HepG2 (cell line): ENCODE measurements at regions of chr2 and their contacts with region 1.

Region 1: DNA sequence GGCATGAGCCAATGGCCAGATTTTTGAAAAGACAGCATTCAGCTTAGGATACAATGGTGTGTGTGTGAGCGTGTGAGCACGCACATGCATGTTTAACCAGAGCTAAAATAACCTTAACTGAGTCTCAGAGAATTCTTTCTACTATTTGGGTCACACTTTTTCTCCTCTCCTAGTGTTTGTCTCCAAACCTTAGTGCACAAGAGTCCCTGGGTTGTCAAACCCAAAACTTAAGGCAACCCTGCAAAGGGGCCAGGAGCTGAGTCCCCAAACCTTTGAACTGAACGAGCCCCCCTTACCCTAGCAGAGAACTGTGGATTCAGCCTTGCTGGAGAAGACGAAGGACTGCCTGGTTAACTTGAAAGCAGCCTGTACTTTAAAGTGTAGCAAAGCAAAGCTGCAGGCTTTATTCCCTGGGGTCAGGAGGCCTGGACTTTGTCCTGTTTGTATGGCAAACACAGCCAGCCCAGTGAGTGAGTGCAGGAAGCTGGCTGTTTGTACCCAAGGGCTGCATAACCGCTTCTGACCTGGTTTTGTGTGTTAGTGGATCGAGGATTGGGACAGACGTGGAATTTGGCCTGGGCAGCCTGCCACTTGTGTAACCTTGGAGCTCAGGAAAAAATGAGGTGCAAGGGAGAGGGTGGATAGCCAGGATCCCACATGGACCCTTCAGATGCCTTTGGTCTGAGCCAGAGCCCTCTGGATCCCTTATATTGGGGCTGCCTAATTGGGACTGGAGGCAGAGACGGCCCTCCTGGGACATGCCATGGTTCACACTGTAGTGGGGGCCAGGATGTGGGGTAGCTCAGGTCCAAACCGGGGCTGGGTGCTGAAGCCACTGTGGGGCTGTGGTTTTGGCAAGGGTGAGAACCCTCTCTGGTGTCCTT is 6.4 kb upstream of the PSMD1 start:
- DNase-seq: peak; percentile 100
- ATAC-seq: peak; percentile 76
- H3K4me3 ChIP-seq: peak overlapping the region; percentile 40 to 82 (median 57)
- H3K27ac ChIP-seq: peak overlapping the region; percentile 97
- H3K4me1 ChIP-seq: peaks cover 82% of the 10 kb centered on the region
- H3K27me3 ChIP-seq: no peaks in the 10 kb centered on the region; a peak in 1 of 5 replicates
- CTCF ChIP-seq: peak; percentile 53
- EP300 ChIP-seq: peak; percentile 89 to 99
- POLR2A ChIP-seq: peak in 1 of 2 experiments; percentile 99; a peak in 2 of 4 replicates
- RAD21 ChIP-seq: peak; percentile 31; the same call in 1 of the 2 replicates

Region 2: DNA sequence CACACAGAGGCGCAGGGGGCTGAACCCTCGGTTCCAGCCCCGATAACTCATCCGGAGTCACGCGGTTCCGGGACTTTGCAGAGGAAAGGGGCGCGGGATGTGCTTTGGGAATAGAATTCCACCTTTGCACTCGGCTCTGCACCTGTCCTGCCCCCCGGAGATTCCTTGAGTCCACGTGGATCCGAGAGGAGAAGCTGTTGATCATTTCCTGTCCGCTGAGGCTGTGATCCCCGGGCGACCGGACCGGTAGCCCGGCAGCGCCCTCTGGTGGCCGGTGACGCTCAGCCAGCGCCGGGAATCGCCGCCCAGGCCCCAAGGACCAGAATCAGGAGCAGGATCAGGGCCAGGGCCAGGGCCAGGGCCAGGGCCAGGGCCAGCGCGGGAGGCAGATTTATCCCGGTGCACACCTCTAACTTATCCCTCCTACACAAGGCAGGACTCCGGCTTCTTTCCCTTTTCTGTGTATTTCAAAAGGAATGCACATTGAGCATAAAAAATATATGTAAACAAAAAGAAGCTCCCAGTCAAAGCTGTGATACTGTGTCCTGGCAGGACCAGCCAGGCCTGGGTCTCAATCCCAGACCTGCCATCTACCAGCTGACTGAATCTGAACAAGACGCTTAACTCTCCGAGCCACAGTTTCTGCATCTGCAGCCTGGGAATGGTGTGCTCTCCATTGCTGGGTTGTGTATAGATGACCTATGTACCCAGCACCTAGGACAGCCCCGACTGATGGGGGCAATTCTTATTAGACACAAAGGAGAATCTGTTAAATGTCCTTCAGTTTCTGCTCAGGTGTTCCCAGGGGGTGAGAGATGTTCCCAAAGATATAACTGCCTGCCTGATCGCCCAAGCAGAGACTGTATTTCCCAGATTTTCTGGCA is 62.9 kb before region 1 on chr2:
- CTCF ChIA-PET with region 1: interaction called, 4 read pairs
- POLR2A ChIA-PET with region 1: interaction called, 13 read pairs
- in situ Hi-C with region 1: no loop called
- intact Hi-C with region 1: loop called (anchors 1 kb)
- DNase-seq: peak; percentile 71
- ATAC-seq: peak; percentile 93
- H3K4me3 ChIP-seq: peak overlapping the region; percentile 51 to 75 (median 53)
- H3K27ac ChIP-seq: no peak overlapping the region
- H3K4me1 ChIP-seq: peaks cover 40% of the 10 kb centered on the region
- H3K27me3 ChIP-seq: peaks cover 1 to 25% of the 10 kb centered on the region in 2 experiments; a peak in 3 of 5 replicates
- CTCF ChIP-seq: peak; percentile 99
- EP300 ChIP-seq: no peak
- POLR2A ChIP-seq: no peak
- RAD21 ChIP-seq: peak; percentile 99

Region 3: DNA sequence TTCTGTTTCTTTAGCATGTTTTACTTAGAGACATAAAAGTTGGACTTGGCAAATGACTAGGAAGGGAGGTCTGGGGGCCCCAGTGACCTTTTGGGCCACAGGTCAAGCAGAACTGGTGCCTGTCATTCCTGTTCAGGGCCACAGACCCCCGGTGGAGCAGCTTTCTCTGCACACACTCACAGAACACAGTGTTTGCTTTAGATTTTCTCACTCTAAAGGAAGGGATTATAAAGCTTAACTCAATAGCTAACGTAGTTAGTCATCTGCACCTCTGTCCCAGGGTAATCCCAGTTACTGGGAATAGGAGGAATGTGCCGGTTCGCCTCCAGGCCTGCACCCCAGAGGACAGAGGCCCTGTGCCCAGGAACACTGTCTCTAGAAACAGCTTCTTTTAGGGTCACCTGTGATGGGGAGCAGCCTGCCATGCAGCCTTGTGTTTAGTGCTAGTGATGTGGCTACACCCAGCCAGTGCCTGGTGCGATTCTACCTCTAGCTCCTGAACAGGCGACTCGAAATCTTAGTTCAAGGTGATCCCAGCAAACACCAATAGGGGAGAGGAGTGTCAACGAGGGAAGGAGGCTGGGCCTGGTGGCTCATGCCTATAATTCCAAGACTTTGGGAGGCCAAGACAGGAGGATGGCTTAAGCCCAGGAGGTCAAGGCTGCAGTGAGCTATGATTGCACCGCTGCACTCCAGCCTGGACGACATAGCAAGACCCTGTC is 42.8 kb before region 1 on chr2:
- CTCF ChIA-PET with region 1: no interaction called
- POLR2A ChIA-PET with region 1: interaction called, 46 read pairs
- in situ Hi-C with region 1: no loop called
- intact Hi-C with region 1: loop called (anchors 2 kb)
- DNase-seq: peak; percentile 76
- ATAC-seq: peak; percentile 89
- H3K4me3 ChIP-seq: peak overlapping the region in 1 of 3 experiments; percentile 15; a peak in 1 of 6 replicates
- H3K27ac ChIP-seq: peak overlapping the region; percentile 7
- H3K4me1 ChIP-seq: peaks cover 36% of the 10 kb centered on the region
- H3K27me3 ChIP-seq: peaks cover 3 to 48% of the 10 kb centered on the region in 2 experiments; a peak in 4 of 5 replicates
- CTCF ChIP-seq: no peak
- EP300 ChIP-seq: peak in 1 of 2 experiments; percentile 70; a peak in 2 of 4 replicates
- POLR2A ChIP-seq: no peak
- RAD21 ChIP-seq: no peak

Region 4: GRCh38 chr2:231028889-231029288 is 21.4 kb before region 1 on chr2:
- CTCF ChIA-PET with region 1: no interaction called
- POLR2A ChIA-PET with region 1: interaction called, 66 read pairs
- in situ Hi-C with region 1: no loop called
- intact Hi-C with region 1: loop called (anchors 1 kb)
- DNase-seq: no peak
- ATAC-seq: no peak
- H3K4me3 ChIP-seq: no peak overlapping the region
- H3K27ac ChIP-seq: no peak overlapping the region
- H3K4me1 ChIP-seq: peaks cover 64% of the 10 kb centered on the region
- H3K27me3 ChIP-seq: no peaks in the 10 kb centered on the region
- CTCF ChIP-seq: no peak
- EP300 ChIP-seq: no peak
- POLR2A ChIP-seq: no peak
- RAD21 ChIP-seq: no peak

Region 5: DNA sequence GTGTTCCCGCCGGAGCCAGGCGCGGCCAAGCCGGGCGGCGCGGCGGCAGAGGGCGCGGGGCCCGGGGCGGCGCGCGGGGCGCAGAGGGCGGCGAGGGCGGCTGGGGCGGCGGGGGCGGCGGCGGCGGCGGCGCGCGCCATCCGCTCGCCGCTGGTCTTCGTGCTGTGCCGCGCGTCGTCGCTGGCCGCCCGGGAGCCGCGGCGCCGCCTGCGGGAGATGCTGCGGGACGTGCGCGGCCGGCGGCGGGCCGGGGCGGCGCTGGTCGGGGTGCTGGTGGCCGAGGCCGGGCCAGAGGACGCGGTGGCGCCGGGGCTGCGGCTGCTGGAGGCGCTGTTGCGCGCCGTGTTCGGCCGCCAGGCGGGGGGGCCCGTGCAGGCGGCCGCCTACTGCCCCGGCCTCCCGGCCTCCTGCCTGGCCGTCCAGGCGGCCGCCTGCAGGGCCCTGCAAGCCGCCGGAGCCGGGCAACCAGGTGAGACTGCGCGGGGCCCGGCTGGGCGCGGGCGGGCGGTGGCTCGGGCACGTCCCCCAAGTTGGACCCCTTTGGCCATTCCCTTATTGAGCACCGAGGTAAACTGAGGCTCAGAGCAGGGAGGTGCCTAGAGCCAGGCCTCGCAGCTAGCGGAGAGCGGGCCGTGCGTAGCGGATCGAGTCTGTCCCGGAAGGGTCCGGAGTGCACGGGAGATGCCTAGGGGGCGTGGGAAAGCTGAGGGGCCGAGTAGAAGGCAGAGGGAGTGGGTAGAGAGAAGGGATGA is 12.4 kb before region 1 on chr2:
- CTCF ChIA-PET with region 1: interaction called, 25 read pairs
- POLR2A ChIA-PET with region 1: interaction called, 399 read pairs
- in situ Hi-C with region 1: no loop called
- intact Hi-C with region 1: loop called (anchors 1 kb)
- DNase-seq: no peak
- ATAC-seq: peak; percentile 31
- H3K4me3 ChIP-seq: peak overlapping the region; percentile 83 to 99 (median 99)
- H3K27ac ChIP-seq: peak overlapping the region; percentile 92
- H3K4me1 ChIP-seq: peaks cover 86% of the 10 kb centered on the region
- H3K27me3 ChIP-seq: no peaks in the 10 kb centered on the region; a peak in 1 of 5 replicates
- CTCF ChIP-seq: peak; percentile 41
- EP300 ChIP-seq: no peak
- POLR2A ChIP-seq: no peak
- RAD21 ChIP-seq: peak; percentile 85

Region 6: GRCh38 chr2:231068525-231069222 is 18.4 kb after region 1 on chr2:
- CTCF ChIA-PET with region 1: interaction called, 4 read pairs
- POLR2A ChIA-PET with region 1: interaction called, 16 read pairs
- in situ Hi-C with region 1: no loop called
- intact Hi-C with region 1: no loop called
- DNase-seq: peak; percentile 87
- ATAC-seq: peak; percentile 89
- H3K4me3 ChIP-seq: no peak overlapping the region
- H3K27ac ChIP-seq: peak overlapping the region; percentile 25
- H3K4me1 ChIP-seq: peaks cover 41% of the 10 kb centered on the region
- H3K27me3 ChIP-seq: no peaks in the 10 kb centered on the region
- CTCF ChIP-seq: no peak
- EP300 ChIP-seq: peak in 1 of 2 experiments; percentile 64; a peak in 1 of 4 replicates
- POLR2A ChIP-seq: no peak
- RAD21 ChIP-seq: no peak